Left ventricle myocardium superior (tissue), 1 donor: ENCODE measurements at regions of chr3 and their contacts with region 1.

Region 1: GRCh38 chr3:128094295-128095151 is 29.1 kb downstream of the RUVBL1 start:
- DNase-seq: no peak
- ATAC-seq: peak; percentile 11

Region 2: GRCh38 chr3:127959846-127960245 is 134.7 kb before region 1 on chr3:
- intact Hi-C with region 1: no loop called
- DNase-seq: peak; percentile 47
- ATAC-seq: peak; percentile 66

Region 3: DNA sequence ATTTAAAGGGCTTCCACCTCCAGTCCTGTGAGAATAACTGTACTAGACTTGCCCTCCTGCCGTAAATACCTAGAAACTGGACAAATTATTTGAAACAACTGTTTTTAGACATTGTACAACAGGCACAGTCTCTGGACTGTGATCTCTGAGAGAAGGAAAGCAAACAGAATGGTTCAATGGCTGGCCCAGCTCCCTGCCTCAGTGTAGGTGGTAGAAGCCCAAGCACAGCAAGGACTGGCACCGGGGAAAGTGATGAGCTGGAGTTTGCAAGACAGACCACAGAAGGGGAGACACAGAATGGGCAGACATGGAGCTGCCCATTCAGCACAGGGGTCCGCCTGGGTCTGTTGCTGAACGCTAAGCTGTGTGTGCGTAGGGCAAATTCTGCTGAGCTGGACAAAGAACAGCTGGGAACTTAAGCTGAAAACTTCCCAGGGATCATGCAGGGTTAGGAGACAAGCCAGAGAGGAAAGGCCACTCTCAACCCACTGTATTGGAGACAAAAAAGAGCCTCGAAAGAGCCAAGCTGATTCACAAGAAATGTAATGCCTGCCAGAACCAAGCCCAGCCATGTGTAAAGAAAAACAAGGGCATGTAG is 94.9 kb before region 1 on chr3:
- intact Hi-C with region 1: no loop called
- DNase-seq: no peak
- ATAC-seq: no peak

Region 4: DNA sequence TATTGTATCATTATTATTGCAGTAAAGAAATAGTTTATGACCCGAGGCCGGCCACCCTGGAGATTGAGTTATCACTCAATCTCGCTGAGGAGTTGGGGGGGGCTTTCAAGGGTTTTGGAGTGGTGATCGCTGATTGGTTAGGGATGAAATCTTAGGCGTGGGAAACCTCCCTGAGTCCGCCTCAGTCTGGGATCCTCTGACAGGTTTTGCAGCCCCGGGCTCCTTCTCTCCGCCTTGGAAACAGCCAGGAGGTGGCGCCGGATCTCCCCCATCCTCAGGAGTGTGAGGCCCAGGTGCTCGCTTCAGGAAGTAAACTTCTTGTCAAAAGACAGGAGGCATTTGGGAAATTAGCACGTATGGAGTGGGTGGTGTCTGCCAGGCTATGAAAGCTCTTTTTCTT is 83.4 kb before region 1 on chr3:
- intact Hi-C with region 1: no loop called
- DNase-seq: peak; percentile 38
- ATAC-seq: no peak

Region 5: DNA sequence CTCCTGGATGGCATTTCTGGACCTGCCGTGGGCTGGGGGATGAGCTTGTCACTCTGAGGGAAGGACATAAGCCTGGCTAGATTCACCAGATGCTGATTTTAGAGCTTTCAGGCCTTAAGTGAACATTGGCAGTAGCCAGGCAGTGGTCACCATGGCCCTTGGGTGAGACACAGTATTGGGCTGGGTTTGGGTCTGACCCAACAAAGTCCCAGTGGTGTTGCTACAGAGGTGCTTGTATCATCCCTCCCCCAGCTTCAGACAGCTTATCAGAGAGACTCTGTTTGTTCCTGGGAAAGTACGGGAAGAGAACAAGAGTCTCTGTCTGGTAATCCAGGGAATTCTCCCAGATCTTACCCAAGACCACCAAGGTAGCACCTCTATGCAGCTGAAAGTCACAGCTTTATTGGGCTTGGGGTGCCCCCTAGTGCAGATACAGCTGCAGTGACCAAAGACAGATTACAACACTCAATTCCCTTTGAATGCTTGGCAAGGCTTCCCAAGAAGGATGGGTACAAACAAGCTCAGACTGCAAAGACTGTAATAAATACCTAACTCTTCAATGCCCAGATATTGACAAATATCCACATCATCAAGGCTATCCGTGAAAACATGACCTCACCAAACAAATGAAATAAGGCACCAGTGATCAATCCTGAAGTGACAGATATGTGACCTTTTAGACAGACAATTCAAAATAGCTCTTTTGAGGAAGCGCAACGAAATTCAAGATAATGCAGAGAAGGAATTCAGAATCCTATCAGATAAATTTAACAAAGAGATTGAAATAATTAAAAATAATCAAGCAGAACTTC is 39.0 kb after region 1 on chr3:
- intact Hi-C with region 1: loop called (anchors 5 kb)
- DNase-seq: no peak
- ATAC-seq: peak; percentile 76